ENCODE measurements at regions of chr1 and their contacts with region 1.

Region 1: GRCh38 chr1:6624710-6625583 is at the start of gene THAP3:
- DNase-seq: peak; percentile 77 to 90 (median 87)
- ATAC-seq: peak; percentile 99
- H3K4me3 ChIP-seq: peak within 1 kb of the TSS; percentile 52
- H3K4me3 Mint-ChIP-seq: peak within 1 kb of the TSS; percentile 86 to 97 (median 92)
- H3K27ac ChIP-seq: peak within 1 kb of the TSS; percentile 78
- H3K27ac Mint-ChIP-seq: peak within 1 kb of the TSS; percentile 72 to 96 (median 86)
- H3K4me1 ChIP-seq: peaks cover 13 to 18% of the 10 kb centered on the region in 2 donors
- H3K4me1 Mint-ChIP-seq: peaks cover 11 to 39% (median 30%) of the 10 kb centered on the region in 7 donors
- H3K27me3 ChIP-seq: no peaks in the 10 kb centered on the region
- H3K27me3 Mint-ChIP-seq: no peaks in the 10 kb centered on the region
- total RNA-seq, gene THAP3: 14.1 to 30.5 (median 20.3) TPM

Region 2: DNA sequence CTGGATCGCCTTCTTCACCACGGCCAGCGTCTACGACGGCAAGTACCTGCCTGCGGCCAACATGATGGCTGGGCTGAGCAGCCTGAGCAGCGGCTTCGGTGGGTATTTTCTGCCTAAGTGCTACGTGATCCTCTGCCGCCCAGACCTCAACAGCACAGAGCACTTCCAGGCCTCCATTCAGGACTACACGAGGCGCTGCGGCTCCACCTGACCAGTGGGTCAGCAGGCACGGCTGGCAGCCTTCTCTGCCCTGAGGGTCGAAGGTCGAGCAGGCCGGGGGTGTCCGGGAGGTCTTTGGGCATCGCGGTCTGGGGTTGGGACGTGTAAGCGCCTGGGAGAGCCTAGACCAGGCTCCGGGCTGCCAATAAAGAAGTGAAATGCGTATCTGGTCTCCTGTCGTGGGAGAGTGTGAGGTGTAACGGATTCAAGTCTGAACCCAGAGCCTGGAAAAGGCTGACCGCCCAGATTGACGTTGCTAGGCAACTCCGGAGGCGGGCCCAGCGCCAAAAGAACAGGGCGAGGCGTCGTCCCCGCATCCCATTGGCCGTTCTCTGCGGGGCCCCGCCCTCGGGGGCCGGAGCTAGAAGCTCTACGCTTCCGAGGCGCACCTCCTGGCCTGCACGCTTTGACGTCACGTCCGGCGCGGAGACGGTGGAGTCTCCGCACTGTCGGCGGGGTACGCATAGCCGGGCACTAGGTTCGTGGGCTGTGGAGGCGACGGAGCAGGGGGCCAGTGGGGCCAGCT is 45.4 kb before region 1 on chr1 and contains the start of gene ZBTB48:
- CTCF ChIA-PET with region 1: interaction called, 3 read pairs
- POLR2A ChIA-PET with region 1: interaction called, 5 read pairs
- intact Hi-C with region 1: loop called (anchors 1 to 2 kb)
- DNase-seq: peak; percentile 92 to 97 (median 94)
- ATAC-seq: peak; percentile 98
- H3K4me3 ChIP-seq: peak within 1 kb of the TSS; percentile 76
- H3K4me3 Mint-ChIP-seq: peak within 1 kb of the TSS; percentile 76 to 97 (median 96)
- H3K27ac ChIP-seq: peak within 1 kb of the TSS; percentile 91
- H3K27ac Mint-ChIP-seq: peak within 1 kb of the TSS; percentile 88 to 98 (median 95)
- H3K4me1 ChIP-seq: peaks cover 25 to 27% of the 10 kb centered on the region in 2 donors
- H3K4me1 Mint-ChIP-seq: peaks cover 27 to 43% (median 35%) of the 10 kb centered on the region in 7 donors
- H3K27me3 ChIP-seq: no peaks in the 10 kb centered on the region
- H3K27me3 Mint-ChIP-seq: no peaks in the 10 kb centered on the region
- total RNA-seq, gene ZBTB48: 39.1 to 70.4 (median 62.2) TPM

Region 3: DNA sequence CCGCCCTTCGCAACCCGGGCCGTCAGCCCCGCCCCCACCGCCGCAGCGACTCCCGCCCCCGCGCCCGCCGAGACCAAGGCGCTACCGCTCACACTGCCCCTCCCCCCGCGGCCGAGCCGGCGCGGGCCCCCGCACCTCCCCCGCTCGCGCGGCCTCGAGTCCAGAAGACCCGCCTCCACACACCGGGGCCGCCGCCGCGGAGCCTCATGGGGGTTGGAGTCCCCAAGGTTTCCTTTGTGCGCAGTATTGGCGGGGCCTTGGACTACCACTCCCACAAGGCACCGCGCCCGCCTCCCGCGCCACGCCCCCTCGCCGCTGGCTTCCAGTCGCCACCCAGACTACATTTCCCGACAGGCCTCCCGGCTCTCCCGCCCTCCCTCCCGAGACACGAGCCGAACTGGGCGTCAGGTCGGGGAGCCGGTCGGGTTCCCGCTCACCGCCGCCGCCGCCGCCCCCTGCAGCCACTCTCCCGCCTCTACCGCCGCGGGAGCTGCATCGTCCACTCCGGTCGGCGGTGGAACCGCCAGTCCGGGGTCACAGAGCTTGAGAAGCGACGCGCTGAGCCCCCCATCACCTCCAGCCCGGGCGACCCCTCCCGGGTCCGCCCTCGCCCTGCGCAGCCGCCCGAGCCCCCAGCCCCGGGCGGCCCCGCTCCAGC is 11.5 kb before region 1 on chr1 and contains the start of gene PHF13:
- CTCF ChIA-PET with region 1: no interaction called
- POLR2A ChIA-PET with region 1: interaction called, 246 read pairs
- intact Hi-C with region 1: loop called (anchors 1 kb)
- DNase-seq: peak; percentile 97 to 99 (median 98)
- ATAC-seq: peak; percentile 98
- H3K4me3 ChIP-seq: peak within 1 kb of the TSS; percentile 53
- H3K4me3 Mint-ChIP-seq: peak within 1 kb of the TSS; percentile 88 to 97 (median 93)
- H3K27ac ChIP-seq: peak within 1 kb of the TSS; percentile 82
- H3K27ac Mint-ChIP-seq: peak within 1 kb of the TSS; percentile 69 to 95 (median 88)
- H3K4me1 ChIP-seq: peaks cover 0 to 14% of the 10 kb centered on the region in 2 donors
- H3K4me1 Mint-ChIP-seq: peaks cover 16 to 37% (median 25%) of the 10 kb centered on the region in 7 donors
- H3K27me3 ChIP-seq: no peaks in the 10 kb centered on the region
- H3K27me3 Mint-ChIP-seq: peaks cover 0 to 2% (median 0%) of the 10 kb centered on the region in 5 donors
- total RNA-seq, gene PHF13: 7.7 to 14.3 (median 12.2) TPM

Region 4: GRCh38 chr1:6701437-6702153 is 76.6 kb after region 1 on chr1 and contains the start of gene DNAJC11:
- CTCF ChIA-PET with region 1: no interaction called
- POLR2A ChIA-PET with region 1: no interaction called
- intact Hi-C with region 1: loop called in 1 of 2 experiments (anchors 5 kb)
- DNase-seq: peak; percentile 84 to 99 (median 93)
- ATAC-seq: peak; percentile 99
- H3K4me3 ChIP-seq: peak within 1 kb of the TSS; percentile 90
- H3K4me3 Mint-ChIP-seq: peak within 1 kb of the TSS; percentile 87 to 96 (median 93)
- H3K27ac ChIP-seq: peak within 1 kb of the TSS; percentile 92
- H3K27ac Mint-ChIP-seq: peak within 1 kb of the TSS; percentile 77 to 95 (median 92)
- H3K4me1 ChIP-seq: peaks cover 8 to 9% of the 10 kb centered on the region in 2 donors
- H3K4me1 Mint-ChIP-seq: peaks cover 7 to 40% (median 32%) of the 10 kb centered on the region in 7 donors
- H3K27me3 ChIP-seq: no peaks in the 10 kb centered on the region
- H3K27me3 Mint-ChIP-seq: no peaks in the 10 kb centered on the region
- total RNA-seq, gene DNAJC11: 37.2 to 49.7 (median 44.0) TPM

Region 5: DNA sequence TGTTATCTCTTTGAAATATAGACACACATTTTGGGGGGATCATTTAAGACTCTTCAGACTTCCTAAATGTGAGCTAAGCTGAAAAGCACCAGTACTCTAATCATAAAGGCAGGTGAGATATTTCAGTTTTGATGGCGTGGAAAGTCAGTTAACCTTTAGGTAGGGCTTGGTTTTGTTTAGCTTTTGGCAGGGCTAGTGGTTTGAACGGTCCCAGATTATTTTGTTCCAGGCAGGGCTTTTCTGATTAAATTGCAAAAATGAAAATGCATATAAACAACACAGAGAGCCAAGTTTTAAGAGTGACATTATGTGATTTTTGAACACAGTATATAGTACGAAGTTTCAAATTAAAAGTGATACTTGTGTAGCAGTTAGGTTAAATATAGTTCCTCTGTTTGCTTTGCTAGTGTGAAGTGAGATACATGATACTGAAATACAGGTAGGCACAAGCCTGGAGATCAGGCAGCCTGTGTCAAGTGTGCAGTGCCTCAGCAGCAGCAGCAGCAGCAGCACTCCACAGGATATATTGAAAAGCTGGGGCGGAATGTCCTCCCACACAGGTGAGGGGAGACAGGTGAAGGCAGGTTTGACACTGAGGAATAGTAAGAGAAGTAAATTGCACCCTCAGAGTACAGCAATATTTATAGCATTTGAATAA is 207.7 kb after region 1 on chr1:
- CTCF ChIA-PET with region 1: no interaction called
- POLR2A ChIA-PET with region 1: no interaction called
- intact Hi-C with region 1: no loop called
- DNase-seq: no peak
- ATAC-seq: no peak
- H3K4me3 ChIP-seq: no peak overlapping the region
- H3K4me3 Mint-ChIP-seq: no peak overlapping the region
- H3K27ac ChIP-seq: no peak overlapping the region
- H3K27ac Mint-ChIP-seq: peak overlapping the region in 2 of 9 donors; percentile 4 to 42
- H3K4me1 ChIP-seq: no peaks in the 10 kb centered on the region
- H3K4me1 Mint-ChIP-seq: peaks cover 0 to 16% (median 12%) of the 10 kb centered on the region in 7 donors
- H3K27me3 ChIP-seq: no peaks in the 10 kb centered on the region
- H3K27me3 Mint-ChIP-seq: no peaks in the 10 kb centered on the region

Measured in naive thymus-derived CD4-positive, alpha-beta T cell (primary cell).